ENCODE measurements at regions of chr11 and their contacts with region 1.

Region 1: GRCh38 chr11:72525466-72525865 is 91.1 kb upstream of the CLPB start:
- DNase-seq: no peak
- ATAC-seq: no peak

Region 2: DNA sequence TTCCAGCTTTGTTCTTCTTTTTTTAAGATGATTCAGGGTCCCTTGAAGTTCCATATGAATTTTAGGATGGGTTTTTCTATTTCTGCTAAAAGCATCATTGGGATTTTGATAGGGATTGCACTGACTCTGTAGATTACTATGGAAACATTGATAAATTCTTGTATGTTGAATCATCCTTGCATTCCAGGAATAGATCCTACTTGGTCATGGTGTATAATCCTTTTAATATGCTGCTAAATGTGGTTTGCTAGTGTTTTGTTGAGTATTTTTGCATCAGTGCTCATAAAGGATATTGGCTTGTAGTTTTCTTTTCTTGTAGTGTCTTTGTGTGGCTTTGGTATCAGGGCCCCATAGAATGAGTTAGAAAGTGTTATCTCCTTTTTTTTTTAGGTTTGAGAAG is 246.6 kb before region 1 on chr11:
- intact Hi-C with region 1: no loop called
- DNase-seq: no peak
- ATAC-seq: no peak

Region 3: DNA sequence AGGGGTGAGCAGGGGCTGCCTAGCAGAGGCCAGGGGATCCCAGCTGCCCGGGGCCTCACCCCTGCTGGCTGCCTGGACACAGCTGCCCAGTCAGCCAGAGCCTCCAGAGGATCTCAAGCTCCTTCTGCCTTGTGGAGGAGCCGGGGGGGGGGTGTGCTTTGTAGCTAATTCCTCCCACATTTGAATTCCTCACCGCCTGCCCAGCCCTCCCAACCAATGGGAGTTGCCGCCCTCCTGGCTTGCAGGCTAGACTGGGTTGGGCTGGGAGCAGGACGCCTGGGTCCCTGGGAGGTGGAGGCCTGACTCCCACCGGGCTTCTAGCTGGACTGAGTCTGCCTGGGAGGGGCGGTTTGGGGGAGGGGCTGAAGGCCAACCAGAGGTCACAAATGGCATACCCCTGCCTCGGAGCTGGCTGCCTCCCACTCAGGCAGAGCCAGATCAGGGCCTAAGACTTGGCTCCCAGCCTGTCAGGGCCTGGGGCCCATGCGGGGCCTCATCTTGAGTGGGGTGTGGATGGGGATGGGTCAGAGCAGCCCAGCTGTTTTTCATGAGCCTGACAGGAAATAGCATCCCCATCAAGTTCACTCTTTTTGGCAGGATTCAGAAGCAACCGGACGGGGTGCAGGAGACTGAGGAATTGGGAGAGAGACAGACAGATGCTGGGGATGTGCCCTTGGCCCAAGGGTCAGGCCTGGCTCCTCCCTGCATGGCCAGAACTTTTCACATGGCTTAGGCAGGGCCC is 178.0 kb after region 1 on chr11:
- intact Hi-C with region 1: loop called (anchors 2 kb)
- DNase-seq: peak; percentile 89
- ATAC-seq: peak; percentile 90